Activated naive CD4-positive, alpha-beta T cell treated with anti-CD3 and anti-CD28 coated beads for 36 hours (primary cell): ENCODE measurements at regions of chr3 and their contacts with region 1.

Region 1: GRCh38 chr3:151282921-151283320 is 4.6 kb upstream of the P2RY14 start:
- DNase-seq: no peak
- H3K4me3 Mint-ChIP-seq: no peak overlapping the region
- H3K27ac Mint-ChIP-seq: no peak overlapping the region
- H3K4me1 Mint-ChIP-seq: peaks cover 28% of the 10 kb centered on the region
- H3K27me3 Mint-ChIP-seq: no peaks in the 10 kb centered on the region

Region 2: DNA sequence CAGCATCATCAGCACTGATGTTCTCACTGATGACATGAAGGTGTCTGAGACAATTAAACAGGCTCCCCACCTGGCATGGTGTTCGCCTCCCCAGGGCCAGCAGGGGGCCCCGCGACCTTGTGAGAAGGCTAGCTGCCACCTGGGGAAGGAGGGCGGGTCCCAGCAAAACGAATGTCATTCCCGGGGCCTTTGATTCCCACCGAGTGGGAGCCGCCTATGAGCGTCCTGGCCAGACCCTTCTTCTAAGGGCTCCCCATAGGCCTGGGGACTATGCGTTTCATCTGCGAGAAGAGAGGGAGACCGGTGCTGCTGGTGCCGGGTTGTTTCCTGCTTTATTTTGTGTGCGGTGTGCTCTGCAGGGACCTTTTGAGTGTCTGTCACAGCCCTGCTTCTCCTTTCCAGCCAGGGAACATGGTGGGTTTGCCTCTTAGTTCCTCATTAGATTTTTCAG is 357.1 kb before region 1 on chr3:
- CTCF ChIA-PET with region 1: no interaction called
- intact Hi-C with region 1: loop called (anchors 5 kb)
- DNase-seq: peak; percentile 72
- H3K4me3 Mint-ChIP-seq: peak overlapping the region; percentile 39
- H3K27ac Mint-ChIP-seq: no peak overlapping the region
- H3K4me1 Mint-ChIP-seq: peaks cover 4% of the 10 kb centered on the region
- H3K27me3 Mint-ChIP-seq: peaks cover 5% of the 10 kb centered on the region

Region 3: GRCh38 chr3:151210676-151211381 is 72.1 kb before region 1 on chr3:
- CTCF ChIA-PET with region 1: interaction called, 10 read pairs
- intact Hi-C with region 1: loop called (anchors 1 kb)
- DNase-seq: peak; percentile 31
- H3K4me3 Mint-ChIP-seq: peak overlapping the region; percentile 48
- H3K27ac Mint-ChIP-seq: peak overlapping the region; percentile 90
- H3K4me1 Mint-ChIP-seq: peaks cover 56% of the 10 kb centered on the region
- H3K27me3 Mint-ChIP-seq: no peaks in the 10 kb centered on the region

Region 4: DNA sequence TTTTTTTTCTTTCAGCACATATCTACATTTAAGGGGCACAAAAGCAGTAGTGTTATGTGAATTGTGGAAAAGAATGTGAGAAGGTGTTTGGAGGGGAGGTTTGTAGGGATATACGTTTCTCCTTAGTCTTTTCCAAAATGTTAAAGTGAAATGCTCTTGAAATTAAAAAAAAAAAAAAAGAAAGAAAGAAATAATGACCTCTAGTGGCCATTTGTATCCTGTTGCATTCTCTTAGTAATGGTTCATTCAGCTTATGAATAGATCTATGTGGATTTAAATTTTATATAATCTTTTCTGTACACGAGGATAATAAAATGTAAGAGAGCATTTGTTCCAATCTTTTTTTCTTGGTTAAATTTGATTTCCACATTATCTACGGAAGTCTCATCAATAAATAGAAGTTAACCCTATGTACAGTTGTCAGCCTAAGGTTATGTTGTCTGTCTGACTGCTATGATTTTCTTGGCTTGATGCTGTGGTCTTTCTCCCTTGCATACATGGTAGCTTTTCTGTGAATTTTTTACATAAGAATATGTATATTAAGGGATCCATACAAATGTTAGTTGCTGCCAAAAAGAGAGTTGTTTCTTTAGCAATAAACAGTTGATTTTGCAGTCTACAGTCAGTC is 44.8 kb after region 1 on chr3:
- CTCF ChIA-PET with region 1: interaction called, 20 read pairs
- intact Hi-C with region 1: loop called (anchors 2 kb)
- DNase-seq: no peak
- H3K4me3 Mint-ChIP-seq: no peak overlapping the region
- H3K27ac Mint-ChIP-seq: no peak overlapping the region
- H3K4me1 Mint-ChIP-seq: peaks cover 7% of the 10 kb centered on the region
- H3K27me3 Mint-ChIP-seq: peaks cover 4% of the 10 kb centered on the region

Region 5: DNA sequence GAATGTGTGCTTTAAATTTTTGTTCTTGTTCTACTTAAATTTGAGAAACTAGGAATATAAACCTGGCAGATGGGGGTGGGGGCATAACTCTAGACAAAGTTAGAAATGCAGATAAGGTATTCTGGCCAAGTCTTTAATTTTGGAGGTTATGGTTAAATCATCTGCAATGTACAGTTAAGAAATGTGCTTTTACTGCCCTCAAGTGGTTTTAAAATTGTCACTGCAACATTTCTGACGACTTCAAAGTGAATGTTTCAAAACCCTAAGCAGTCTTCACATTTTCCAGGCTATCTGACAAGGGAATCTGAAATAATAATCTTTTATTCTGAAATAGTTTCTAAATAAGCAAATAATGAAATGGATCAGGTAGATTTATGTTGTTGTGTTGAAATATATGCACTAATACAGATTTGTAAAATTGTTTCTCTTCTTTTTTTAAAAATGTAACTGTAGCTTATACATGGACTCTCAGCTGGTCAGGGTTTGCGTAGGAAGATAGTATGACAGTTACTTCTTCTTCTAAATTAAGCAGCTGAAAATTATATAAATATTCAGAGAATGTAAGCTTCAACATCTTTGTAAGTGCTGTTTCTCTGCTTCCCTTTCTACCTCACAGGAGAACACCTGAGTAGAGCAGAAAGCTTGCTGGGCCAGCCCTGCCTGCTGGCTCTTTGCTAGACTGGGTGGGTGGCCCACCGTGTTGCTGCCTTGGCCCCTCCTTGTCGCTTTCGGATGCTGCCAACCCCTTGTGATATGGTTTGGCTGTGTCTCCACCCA is 635.5 kb after region 1 on chr3:
- CTCF ChIA-PET with region 1: no interaction called
- intact Hi-C with region 1: loop called (anchors 5 kb)
- DNase-seq: no peak
- H3K4me3 Mint-ChIP-seq: no peak overlapping the region
- H3K27ac Mint-ChIP-seq: no peak overlapping the region
- H3K4me1 Mint-ChIP-seq: no peaks in the 10 kb centered on the region
- H3K27me3 Mint-ChIP-seq: no peaks in the 10 kb centered on the region